Activated CD4-positive, alpha-beta T cell treated with anti-CD3 and anti-CD28 coated beads for 36 hours (primary cell): ENCODE measurements at regions of chr4 and their contacts with region 1.

Region 1: GRCh38 chr4:72701987-72702819 is 133.2 kb upstream of the ADAMTS3 start:
- DNase-seq: peak; percentile 44
- ATAC-seq: peak; percentile 68
- H3K4me3 Mint-ChIP-seq: peak overlapping the region; percentile 69
- H3K27ac Mint-ChIP-seq: no peak overlapping the region
- H3K4me1 Mint-ChIP-seq: no peaks in the 10 kb centered on the region
- H3K27me3 Mint-ChIP-seq: peaks cover 4% of the 10 kb centered on the region

Region 2: GRCh38 chr4:72326692-72327632 is 375.2 kb before region 1 on chr4:
- CTCF ChIA-PET with region 1: interaction called, 6 read pairs
- POLR2A ChIA-PET with region 1: no interaction called
- intact Hi-C with region 1: loop called in 1 of 2 experiments (anchors 1 kb)
- DNase-seq: no peak
- ATAC-seq: no peak
- H3K4me3 Mint-ChIP-seq: no peak overlapping the region
- H3K27ac Mint-ChIP-seq: no peak overlapping the region
- H3K4me1 Mint-ChIP-seq: no peaks in the 10 kb centered on the region
- H3K27me3 Mint-ChIP-seq: peaks cover 5% of the 10 kb centered on the region

Region 3: DNA sequence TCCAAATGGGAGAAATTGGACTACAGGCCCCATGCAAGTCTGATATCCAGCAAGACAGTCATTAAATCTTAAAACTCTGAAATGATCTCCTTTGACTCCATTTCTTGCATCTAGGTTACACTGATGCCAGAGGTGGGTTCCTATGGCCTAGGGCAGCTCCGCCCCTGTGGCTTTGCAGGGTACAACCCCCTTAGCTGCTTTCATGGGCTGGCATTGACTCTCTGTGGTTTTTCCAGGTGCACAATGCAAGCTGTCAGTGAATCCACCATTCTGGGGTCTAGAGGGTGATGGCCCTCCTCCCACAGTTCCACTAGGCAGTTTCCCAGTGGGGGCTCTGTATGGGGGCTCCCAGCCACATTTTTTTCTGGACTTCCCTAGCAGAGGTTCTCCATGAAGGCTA is 95.3 kb after region 1 on chr4:
- CTCF ChIA-PET with region 1: no interaction called
- POLR2A ChIA-PET with region 1: no interaction called
- intact Hi-C with region 1: no loop called
- DNase-seq: no peak
- ATAC-seq: no peak
- H3K4me3 Mint-ChIP-seq: no peak overlapping the region
- H3K27ac Mint-ChIP-seq: no peak overlapping the region
- H3K4me1 Mint-ChIP-seq: no peaks in the 10 kb centered on the region
- H3K27me3 Mint-ChIP-seq: no peaks in the 10 kb centered on the region

Region 4: GRCh38 chr4:72886602-72887001 is 184.4 kb after region 1 on chr4:
- CTCF ChIA-PET with region 1: no interaction called
- POLR2A ChIA-PET with region 1: no interaction called
- intact Hi-C with region 1: loop called in 1 of 2 experiments (anchors 10 kb)
- DNase-seq: no peak
- ATAC-seq: no peak
- H3K4me3 Mint-ChIP-seq: no peak overlapping the region
- H3K27ac Mint-ChIP-seq: no peak overlapping the region
- H3K4me1 Mint-ChIP-seq: no peaks in the 10 kb centered on the region
- H3K27me3 Mint-ChIP-seq: peaks cover 10% of the 10 kb centered on the region

Region 5: DNA sequence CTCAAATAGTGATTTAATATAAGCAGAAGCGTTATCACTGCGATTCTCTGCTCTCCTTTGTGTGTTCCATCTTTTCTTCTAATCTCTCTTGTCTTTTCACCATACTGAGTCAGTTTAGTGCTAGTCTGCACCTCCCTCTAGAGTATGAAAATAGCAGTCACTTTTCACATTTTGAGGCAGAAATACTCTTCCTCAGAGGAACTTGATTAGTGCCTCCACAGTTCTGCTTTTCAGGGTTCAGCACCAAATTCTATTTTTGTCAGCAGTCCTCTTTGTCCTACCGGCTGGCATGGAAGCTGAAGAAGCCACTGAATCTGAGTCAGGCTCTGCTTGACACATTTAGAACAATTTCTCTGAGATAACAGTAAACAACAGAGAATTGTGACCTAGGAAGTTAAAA is 606.1 kb after region 1 on chr4:
- CTCF ChIA-PET with region 1: no interaction called
- POLR2A ChIA-PET with region 1: no interaction called
- intact Hi-C with region 1: loop called in 1 of 2 experiments (anchors 5 kb)
- DNase-seq: no peak
- ATAC-seq: no peak
- H3K4me3 Mint-ChIP-seq: no peak overlapping the region
- H3K27ac Mint-ChIP-seq: no peak overlapping the region
- H3K4me1 Mint-ChIP-seq: no peaks in the 10 kb centered on the region
- H3K27me3 Mint-ChIP-seq: no peaks in the 10 kb centered on the region